ENCODE measurements at regions of chr2 and their contacts with region 1.

Region 1: DNA sequence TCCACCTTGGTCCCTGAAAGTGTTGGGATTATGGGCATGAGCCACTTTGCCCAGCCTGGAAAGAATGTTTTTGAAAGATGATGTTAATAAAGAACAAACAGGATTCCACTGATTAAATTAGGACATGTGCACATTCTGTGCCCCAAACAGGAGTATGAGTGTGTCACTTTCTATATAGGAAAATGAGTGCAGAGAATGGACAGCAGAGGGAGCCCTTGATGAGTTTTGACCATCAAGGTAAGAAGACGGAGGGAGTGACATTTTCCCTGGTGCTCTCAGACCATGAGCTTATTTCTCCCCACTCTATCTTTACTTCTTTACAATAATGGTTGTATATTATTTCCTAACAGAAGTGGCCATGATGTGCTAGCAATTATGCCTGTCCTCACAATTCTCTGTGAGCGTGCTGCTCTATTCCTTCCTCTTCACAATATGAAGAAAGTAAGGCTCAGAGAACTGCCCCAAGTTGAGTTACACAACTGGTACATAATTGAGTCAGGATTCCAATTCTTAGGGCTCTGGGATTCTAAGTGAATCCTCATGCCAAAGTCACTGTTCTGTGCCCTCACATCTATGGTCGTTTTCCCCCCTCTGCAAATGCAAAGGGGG is 20.6 kb downstream of the RPL37A start:
- DNase-seq: peak; percentile 59
- ATAC-seq: peak; percentile 81
- H3K4me3 Mint-ChIP-seq: no peak overlapping the region
- H3K27ac Mint-ChIP-seq: no peak overlapping the region
- H3K4me1 Mint-ChIP-seq: peaks cover 6% of the 10 kb centered on the region
- H3K27me3 Mint-ChIP-seq: no peaks in the 10 kb centered on the region
- CTCF ChIP-seq: peak; percentile 70

Region 2: GRCh38 chr2:216533609-216534008 is 14.4 kb after region 1 on chr2:
- CTCF ChIA-PET with region 1: interaction called, 10 read pairs
- POLR2A ChIA-PET with region 1: no interaction called
- DNase-seq: no peak
- ATAC-seq: peak; percentile 27; the same call in 1 of the 2 replicates
- H3K4me3 Mint-ChIP-seq: no peak overlapping the region
- H3K27ac Mint-ChIP-seq: no peak overlapping the region
- H3K4me1 Mint-ChIP-seq: peaks cover 38% of the 10 kb centered on the region
- H3K27me3 Mint-ChIP-seq: no peaks in the 10 kb centered on the region
- CTCF ChIP-seq: no peak

Region 3: DNA sequence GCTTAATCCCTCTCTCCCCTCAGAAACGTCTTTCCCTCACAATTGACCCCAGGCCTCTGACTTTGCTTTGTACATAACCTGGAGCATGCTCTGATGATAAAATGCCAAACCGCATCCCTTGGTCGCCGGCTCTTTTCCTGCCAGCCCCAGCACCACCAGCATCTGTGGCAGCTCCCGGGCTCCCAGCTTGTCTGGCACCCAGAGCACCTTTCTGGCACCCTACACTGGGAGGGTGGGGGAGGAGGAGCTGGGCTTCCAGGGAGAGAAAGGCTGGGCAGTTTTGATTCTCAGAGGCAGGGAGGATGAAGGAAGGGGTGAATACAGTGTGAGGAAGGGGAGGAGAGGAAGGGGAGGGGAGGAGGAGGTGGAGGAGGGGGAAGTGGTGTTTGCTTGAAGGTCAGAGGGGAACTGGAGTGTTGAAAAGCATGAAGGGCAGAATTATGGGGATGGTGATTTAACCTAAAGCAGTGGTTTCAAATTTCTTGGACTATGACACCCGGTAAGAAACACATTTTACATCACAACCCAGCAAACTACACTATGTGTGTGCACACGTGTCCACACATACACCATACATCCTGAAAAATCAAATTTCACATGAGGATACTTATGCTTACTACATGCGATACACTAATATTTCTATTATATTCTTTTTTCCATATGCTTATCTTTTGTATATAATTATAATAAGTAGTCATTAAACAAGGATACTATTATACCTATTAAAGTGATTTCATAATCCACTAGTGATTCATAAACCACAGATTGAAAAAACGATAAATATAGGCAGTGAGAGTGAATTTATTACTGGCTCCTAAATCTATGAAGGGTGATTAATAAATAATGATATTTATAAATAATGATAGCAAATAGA is 84.0 kb after region 1 on chr2:
- CTCF ChIA-PET with region 1: interaction called, 11 read pairs
- POLR2A ChIA-PET with region 1: interaction called, 3 read pairs
- DNase-seq: no peak
- ATAC-seq: no peak; the same call in 1 of the 2 replicates
- H3K4me3 Mint-ChIP-seq: no peak overlapping the region
- H3K27ac Mint-ChIP-seq: 0 out of 2 replicates have a peak overlapping the region, but pooled peaks have one; percentile 5
- H3K4me1 Mint-ChIP-seq: peaks cover 63% of the 10 kb centered on the region
- H3K27me3 Mint-ChIP-seq: peaks cover 10% of the 10 kb centered on the region
- CTCF ChIP-seq: no peak

Region 4: DNA sequence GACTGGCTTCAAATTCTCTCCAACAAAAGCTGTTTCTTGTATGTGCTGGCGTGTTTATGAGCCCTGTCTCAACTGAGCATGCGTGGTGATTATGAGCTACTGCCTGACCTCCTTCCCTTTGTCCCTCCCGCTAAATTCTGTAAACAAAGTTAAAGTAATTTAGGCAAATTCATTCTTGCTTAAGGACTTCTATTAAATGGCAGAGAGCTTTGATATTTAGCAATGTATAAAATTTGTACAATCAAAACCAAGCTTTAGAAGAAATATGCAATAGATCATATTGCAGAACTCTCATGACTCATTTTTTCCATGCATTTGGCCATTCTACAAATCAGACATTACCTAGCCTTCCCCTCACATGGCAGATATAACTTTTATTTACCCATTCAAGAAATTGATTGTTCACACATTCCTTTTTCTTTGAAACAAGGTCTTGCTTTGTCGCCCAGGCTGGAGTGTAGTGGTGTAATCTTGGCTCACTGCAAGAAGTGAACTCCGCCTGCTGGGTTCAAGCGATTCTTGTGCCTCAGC is 132.2 kb after region 1 on chr2:
- CTCF ChIA-PET with region 1: interaction called, 15 read pairs
- POLR2A ChIA-PET with region 1: no interaction called
- DNase-seq: no peak
- ATAC-seq: no peak
- H3K4me3 Mint-ChIP-seq: no peak overlapping the region
- H3K27ac Mint-ChIP-seq: peak overlapping the region; percentile 24; the same call in 1 of the 2 replicates
- H3K4me1 Mint-ChIP-seq: peaks cover 75% of the 10 kb centered on the region
- H3K27me3 Mint-ChIP-seq: no peaks in the 10 kb centered on the region
- CTCF ChIP-seq: no peak

Region 5: GRCh38 chr2:216666461-216667233 is 147.4 kb after region 1 on chr2:
- CTCF ChIA-PET with region 1: interaction called, 244 read pairs
- POLR2A ChIA-PET with region 1: interaction called, 3 read pairs
- DNase-seq: peak; percentile 89
- ATAC-seq: peak; percentile 66
- H3K4me3 Mint-ChIP-seq: no peak overlapping the region
- H3K27ac Mint-ChIP-seq: no peak overlapping the region
- H3K4me1 Mint-ChIP-seq: peaks cover 42% of the 10 kb centered on the region
- H3K27me3 Mint-ChIP-seq: no peaks in the 10 kb centered on the region
- CTCF ChIP-seq: peak; percentile 96

Measured in WTC11 (cell line).